Activated CD4-positive, alpha-beta memory T cell treated with anti-CD3 and anti-CD28 coated beads, Interleukin-2, amount 10 ng/mL, durations not matched to agents 7 days and 5 days (primary cell): ENCODE measurements at regions of chr2 and their contacts with region 1.

Region 1: DNA sequence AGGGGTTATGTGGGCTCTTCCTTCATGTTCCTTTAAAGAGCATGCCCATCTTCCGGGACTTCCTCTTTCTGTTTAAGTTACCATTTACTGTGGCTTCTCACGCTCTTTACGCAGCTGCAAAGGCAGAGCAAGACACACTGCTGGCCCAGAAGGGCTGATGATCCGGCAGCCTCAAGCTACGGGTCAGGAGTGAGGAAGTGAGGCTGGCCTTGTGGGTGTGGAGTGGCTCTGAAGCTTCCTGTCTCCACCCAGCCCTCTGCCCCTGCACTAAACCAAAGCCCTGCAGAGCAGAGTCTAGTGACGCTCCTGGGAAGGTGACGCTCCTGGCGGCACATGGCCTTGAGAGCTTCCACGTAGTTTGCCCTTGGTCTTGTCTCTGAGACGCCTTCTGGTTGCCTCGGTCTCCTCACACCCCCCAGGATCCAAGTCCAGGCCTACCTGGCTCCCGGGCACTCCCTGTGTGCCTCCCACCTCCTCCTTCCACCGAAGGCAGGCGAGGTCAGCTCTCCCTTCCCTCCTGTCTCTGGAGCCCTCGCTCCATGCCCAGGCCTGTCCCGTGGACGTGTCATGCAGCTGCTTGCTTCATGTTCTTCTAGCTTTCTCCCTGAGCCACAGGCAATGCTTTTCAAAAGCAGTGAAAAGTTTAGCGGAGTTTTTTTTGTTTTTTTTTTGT is 50.3 kb downstream of the ARL4C start:
- DNase-seq: peak; percentile 93
- H3K4me3 Mint-ChIP-seq: peak overlapping the region; percentile 55
- H3K27ac Mint-ChIP-seq: peak overlapping the region; percentile 99
- H3K4me1 Mint-ChIP-seq: peaks cover 82% of the 10 kb centered on the region
- H3K27me3 Mint-ChIP-seq: no peaks in the 10 kb centered on the region

Region 2: DNA sequence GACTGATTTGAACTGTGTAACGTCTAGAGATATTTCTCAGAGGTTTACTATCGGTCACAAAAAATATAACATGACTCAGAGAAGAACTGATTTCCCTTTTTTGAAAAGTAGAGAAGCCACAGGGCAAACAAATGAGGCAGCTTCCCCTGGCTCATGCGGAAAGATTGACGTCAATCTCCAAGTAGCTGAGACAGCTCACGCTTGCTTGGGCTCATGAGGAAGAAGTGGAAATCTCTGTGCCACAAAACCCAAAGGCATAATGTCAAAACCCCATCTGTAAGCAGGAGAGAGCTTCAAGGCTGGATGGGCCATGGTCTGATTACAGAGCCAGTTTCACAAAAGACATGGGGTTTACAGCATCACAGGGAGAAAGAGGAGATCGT is 137.7 kb before region 1 on chr2:
- CTCF ChIA-PET with region 1: interaction called, 3 read pairs
- POLR2A ChIA-PET with region 1: interaction called, 11 read pairs
- DNase-seq: peak; percentile 83
- H3K4me3 Mint-ChIP-seq: peak overlapping the region; percentile 29
- H3K27ac Mint-ChIP-seq: peak overlapping the region; percentile 97
- H3K4me1 Mint-ChIP-seq: peaks cover 64% of the 10 kb centered on the region
- H3K27me3 Mint-ChIP-seq: no peaks in the 10 kb centered on the region

Region 3: DNA sequence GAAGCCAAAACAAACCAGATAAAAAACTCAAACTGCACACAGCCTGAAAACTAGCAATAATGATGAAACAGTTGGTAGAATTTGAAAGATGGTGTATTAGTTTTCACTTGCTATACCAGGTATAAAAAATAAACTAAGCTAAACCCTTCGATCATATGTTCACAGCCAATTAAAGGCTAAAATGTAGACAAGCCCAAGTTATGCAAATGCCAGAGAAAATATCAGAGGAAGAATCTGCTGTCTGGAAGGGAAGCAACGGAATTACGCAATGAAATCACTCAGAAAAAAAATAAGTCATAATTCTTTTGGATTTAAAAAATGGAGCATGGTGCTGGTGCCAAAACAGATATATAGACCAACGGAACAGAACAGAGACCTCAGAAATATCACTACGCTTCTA is 58.0 kb before region 1 on chr2:
- CTCF ChIA-PET with region 1: no interaction called
- POLR2A ChIA-PET with region 1: no interaction called
- DNase-seq: no peak
- H3K4me3 Mint-ChIP-seq: no peak overlapping the region
- H3K27ac Mint-ChIP-seq: no peak overlapping the region
- H3K4me1 Mint-ChIP-seq: peaks cover 32% of the 10 kb centered on the region
- H3K27me3 Mint-ChIP-seq: no peaks in the 10 kb centered on the region

Region 4: DNA sequence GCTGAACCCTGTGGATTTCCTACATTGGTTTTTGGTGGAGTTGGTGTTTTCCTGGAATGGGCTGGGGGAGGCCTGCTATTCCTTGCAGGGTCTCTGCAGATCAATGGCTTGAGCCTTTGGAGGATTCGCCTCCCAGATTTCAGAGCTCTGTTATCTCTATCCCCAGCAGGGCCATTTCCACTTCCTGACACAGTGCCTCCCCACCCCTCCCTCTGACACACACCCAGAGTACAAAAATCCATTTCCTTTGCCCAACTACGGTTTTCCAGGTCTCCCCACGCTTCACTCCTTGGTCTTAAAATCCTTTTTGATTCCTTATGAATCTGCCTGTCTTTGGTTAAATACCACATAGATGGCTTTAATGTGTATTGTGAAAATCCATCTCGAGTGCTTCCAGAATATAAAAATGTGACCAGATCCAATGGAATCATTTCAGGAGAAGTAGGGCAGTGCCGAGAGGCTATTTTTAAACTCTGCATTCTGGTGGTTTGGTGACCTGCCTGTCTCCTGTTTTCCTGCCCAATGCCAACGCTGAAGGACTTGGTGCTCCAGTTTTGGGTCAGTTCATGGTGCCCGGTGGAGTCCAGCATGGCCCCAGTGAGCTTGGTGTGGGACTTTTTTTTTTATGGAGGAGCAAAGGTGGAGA is 10.6 kb before region 1 on chr2:
- CTCF ChIA-PET with region 1: interaction called, 4 read pairs
- POLR2A ChIA-PET with region 1: interaction called, 410 read pairs
- DNase-seq: no peak
- H3K4me3 Mint-ChIP-seq: no peak overlapping the region
- H3K27ac Mint-ChIP-seq: no peak overlapping the region
- H3K4me1 Mint-ChIP-seq: peaks cover 28% of the 10 kb centered on the region
- H3K27me3 Mint-ChIP-seq: no peaks in the 10 kb centered on the region

Region 5: DNA sequence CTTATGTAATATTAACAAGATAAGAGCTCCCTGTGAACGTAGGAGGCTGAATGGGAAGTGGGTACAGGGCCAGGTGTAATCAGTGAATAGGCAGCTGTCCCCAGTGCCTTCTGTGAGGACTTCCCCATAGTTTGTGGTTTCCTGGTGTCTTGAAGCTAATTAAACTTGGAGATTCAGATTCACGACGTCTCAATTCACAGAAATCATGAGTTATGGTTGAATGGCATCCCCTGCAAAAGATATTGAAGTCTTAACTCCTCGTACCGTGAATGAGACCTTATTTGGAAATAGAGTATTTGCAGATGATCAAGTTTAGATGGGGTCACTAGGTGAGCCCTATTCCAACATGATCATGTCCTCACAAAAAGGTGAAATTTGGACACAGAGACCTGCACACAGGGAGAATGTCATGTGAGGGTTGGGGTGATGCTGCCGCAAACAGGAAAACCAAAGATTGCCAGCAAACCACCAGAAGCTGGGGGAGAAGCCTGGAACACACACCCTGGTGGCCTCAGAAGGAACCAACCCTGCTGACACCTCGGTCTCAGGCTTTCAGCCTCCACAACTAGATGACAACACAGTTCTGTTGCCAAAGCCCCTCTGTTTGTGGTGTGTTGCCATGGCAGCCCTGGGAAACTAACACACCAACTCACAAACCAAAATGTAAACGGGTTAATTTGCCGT is 37.2 kb after region 1 on chr2:
- CTCF ChIA-PET with region 1: interaction called, 13 read pairs
- POLR2A ChIA-PET with region 1: interaction called, 143 read pairs
- DNase-seq: peak; percentile 90
- H3K4me3 Mint-ChIP-seq: peak overlapping the region; percentile 59
- H3K27ac Mint-ChIP-seq: peak overlapping the region; percentile 88
- H3K4me1 Mint-ChIP-seq: peaks cover 93% of the 10 kb centered on the region
- H3K27me3 Mint-ChIP-seq: no peaks in the 10 kb centered on the region

Region 6: DNA sequence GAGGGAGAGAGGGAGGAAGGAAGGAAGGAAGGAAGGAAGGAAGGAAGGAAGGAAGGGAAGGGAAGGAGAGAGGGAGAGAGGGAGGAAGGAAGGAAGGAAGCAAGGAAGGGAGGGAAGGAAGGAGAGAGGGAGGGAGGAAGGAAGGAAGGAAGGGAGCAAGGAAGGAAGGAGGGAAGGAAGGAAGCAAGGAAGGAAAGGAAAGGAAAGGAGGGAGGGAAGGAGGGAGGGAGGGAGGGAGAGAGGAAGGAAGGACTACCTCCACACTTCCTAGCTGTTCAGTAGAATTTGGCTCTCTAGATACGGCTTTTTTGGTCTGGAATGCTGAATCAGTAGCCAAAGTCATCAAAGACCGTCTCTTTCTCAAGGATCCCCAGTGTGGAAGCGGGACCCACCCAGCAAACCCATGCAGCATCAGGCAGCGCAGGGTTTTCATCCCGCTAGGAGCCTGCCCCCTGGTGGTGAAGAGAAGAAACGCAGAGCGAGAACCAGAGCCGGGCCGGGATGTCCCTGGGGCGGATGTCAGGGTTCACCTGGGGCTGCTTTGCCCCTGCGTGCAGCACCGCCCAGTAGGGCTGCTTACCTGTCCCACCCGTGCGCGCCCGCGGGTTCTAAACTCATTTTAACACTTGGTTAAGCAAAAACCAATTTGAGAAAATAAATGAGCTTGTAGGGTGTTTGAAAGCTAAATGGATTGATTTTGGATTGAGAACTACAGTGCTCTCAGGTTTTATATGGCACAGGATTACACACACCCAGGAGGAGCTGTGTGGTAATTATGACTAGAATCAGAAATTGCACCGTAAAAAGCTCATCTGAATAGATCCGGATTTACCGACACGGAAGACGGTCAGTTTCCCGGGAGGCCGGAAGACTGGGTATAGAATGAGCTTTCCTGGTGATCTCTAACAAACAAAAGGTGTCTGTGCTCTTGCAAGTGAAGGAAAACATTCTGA is 98.4 kb after region 1 on chr2:
- CTCF ChIA-PET with region 1: no interaction called
- POLR2A ChIA-PET with region 1: no interaction called
- DNase-seq: peak; percentile 81
- H3K4me3 Mint-ChIP-seq: no peak overlapping the region
- H3K27ac Mint-ChIP-seq: no peak overlapping the region
- H3K4me1 Mint-ChIP-seq: peaks cover 9% of the 10 kb centered on the region
- H3K27me3 Mint-ChIP-seq: peaks cover 33% of the 10 kb centered on the region

Region 7: DNA sequence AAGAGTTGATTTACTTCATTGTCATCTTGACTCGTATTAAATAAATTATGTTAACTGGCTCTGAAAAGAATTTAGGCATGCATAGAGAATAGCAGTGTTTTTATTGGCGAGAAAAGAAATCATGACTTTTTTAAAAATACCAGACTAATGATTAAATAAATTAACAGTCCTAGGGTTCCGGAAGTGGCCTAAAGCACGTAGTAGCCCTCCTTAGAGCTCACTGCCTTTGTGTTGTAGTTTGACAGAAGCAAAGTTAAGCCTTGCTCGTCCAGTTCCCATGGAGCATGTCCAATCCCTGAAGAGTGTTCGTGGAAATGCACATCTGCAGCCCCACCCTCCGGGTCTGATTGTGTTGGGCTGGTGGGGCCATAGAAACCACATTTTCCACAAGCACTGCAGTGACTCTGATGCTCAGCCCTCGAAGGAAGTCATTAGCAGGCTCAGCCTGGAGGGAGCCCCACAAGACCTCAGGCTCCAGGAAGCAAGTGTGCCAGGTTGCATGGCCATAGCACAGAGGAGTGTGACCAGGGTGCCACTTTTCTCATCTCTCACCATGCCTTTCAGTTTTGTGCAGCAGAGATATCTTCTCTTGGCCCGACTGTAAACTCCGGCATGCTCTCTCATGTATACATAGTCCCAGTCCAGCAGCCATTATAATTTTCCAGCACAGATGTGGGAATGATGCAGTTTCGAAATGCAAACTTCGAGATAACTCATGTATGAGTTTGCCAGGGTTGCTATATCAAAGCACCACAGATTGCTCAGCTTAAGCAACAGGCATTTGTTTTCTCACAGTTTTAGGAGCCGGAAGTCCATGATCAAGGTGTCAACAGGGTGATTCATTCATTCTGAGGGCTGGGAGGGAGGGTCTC is 316.7 kb after region 1 on chr2:
- CTCF ChIA-PET with region 1: no interaction called
- POLR2A ChIA-PET with region 1: no interaction called
- DNase-seq: no peak
- H3K4me3 Mint-ChIP-seq: no peak overlapping the region
- H3K27ac Mint-ChIP-seq: no peak overlapping the region
- H3K4me1 Mint-ChIP-seq: no peaks in the 10 kb centered on the region
- H3K27me3 Mint-ChIP-seq: no peaks in the 10 kb centered on the region